ENCODE measurements at regions of chr3 and their contacts with region 1.

Region 1: GRCh38 chr3:112357930-112358780 is 25.2 kb downstream of the CD200 start:
- DNase-seq: peak; percentile 60 to 74
- ATAC-seq: peak; percentile 52
- H3K4me3 ChIP-seq: peak overlapping the region in 1 of 2 donors; percentile 41
- H3K27ac ChIP-seq: peak overlapping the region; percentile 43 to 92
- H3K4me1 ChIP-seq: peaks cover 0 to 2% of the 10 kb centered on the region in 2 donors
- H3K27me3 ChIP-seq: no peaks in the 10 kb centered on the region

Region 2: GRCh38 chr3:111963424-111963823 is 394.7 kb before region 1 on chr3:
- intact Hi-C with region 1: no loop called
- DNase-seq: no peak
- ATAC-seq: no peak
- H3K4me3 ChIP-seq: no peak overlapping the region
- H3K27ac ChIP-seq: no peak overlapping the region
- H3K4me1 ChIP-seq: no peaks in the 10 kb centered on the region
- H3K27me3 ChIP-seq: no peaks in the 10 kb centered on the region

Region 3: GRCh38 chr3:112425858-112426750 is 67.9 kb after region 1 on chr3:
- intact Hi-C with region 1: loop called in 1 of 2 experiments (anchors 2 kb)
- DNase-seq: no peak
- ATAC-seq: no peak
- H3K4me3 ChIP-seq: no peak overlapping the region
- H3K27ac ChIP-seq: no peak overlapping the region
- H3K4me1 ChIP-seq: no peaks in the 10 kb centered on the region
- H3K27me3 ChIP-seq: no peaks in the 10 kb centered on the region

Measured in aorta (tissue), 5 donors.